ENCODE measurements at regions of chr9 and their contacts with region 1.

Region 1: DNA sequence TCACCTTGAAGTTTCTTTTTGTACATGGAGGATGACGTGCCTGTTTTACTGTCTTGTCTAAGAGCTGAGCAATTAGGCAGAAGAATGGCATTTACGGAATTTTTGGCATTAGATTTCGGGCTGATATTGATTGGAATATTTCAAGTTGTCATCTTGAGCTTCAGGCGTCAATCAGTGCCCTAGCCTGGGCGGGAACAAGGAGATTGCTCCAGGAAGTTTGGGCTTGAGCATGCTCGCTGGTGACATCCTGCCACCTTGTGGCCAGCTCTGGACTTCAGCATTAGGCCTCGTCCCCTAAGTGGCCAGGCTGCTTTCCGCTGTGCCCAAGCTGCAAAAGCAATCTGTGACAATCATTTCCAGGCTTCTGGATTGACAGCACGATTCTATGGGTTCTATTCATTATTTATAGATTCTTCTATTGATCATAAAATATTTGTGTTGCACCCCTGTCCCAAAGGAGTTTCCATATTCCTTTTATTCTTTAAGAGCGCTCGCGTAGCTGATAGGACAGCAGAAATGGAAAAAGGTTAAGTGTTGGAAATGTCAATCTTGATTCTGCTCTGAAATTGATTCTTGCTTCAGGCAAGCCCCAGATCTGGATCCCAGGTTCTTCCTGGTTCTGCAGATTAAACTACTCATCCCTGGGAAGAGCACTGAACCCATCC is 79.3 kb downstream of the SLC28A3 start:
- DNase-seq: peak; percentile 64
- CTCF ChIP-seq: peak; percentile 87

Region 2: DNA sequence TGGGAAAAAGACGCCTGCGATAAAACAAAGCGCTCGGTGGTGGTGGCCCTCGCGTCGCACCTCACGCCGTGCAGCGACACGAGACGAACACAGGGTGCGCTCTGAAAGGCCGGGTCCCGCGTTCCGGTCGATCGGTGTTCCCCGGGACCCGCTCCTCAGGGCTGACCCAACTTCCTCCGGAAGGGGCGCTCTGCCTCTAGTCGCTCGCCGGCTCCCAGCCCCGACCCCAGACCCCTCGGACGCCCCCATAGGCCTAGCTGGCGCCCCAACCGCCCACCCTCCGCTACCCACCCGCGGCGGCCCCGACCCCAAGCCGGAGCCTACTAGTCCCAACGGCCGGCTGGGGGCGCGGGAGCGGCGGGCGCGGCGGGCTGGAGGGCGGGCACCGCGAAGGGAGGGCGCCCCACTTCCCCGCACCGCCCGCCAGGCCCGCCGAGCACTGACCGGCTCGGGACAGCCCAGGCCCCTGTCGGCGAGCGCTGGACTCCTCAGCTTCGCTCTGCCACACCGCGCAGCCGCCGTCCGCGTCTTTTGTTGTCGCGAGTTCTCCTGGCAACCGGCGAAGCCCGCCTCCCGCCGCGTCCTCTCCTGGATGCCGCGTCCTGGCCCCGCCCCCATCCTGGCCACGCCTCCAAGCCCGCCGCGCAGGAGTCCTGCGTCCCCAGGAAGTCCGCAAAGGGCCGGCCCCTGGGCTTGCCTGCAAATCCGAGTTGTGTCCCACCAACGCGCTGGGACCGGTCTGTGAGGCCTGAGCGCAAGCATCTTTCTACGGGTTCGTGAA is 340.1 kb before region 1 on chr9 and contains the start of gene KIF27:
- CTCF ChIA-PET with region 1: interaction called, 14 read pairs
- POLR2A ChIA-PET with region 1: no interaction called
- DNase-seq: peak; percentile 97
- CTCF ChIP-seq: peak; percentile 15

Region 3: GRCh38 chr9:83937911-83938323 is 323.3 kb before region 1 on chr9:
- CTCF ChIA-PET with region 1: interaction called, 15 read pairs
- POLR2A ChIA-PET with region 1: no interaction called
- DNase-seq: peak; percentile 51
- CTCF ChIP-seq: peak; percentile 50

Region 4: DNA sequence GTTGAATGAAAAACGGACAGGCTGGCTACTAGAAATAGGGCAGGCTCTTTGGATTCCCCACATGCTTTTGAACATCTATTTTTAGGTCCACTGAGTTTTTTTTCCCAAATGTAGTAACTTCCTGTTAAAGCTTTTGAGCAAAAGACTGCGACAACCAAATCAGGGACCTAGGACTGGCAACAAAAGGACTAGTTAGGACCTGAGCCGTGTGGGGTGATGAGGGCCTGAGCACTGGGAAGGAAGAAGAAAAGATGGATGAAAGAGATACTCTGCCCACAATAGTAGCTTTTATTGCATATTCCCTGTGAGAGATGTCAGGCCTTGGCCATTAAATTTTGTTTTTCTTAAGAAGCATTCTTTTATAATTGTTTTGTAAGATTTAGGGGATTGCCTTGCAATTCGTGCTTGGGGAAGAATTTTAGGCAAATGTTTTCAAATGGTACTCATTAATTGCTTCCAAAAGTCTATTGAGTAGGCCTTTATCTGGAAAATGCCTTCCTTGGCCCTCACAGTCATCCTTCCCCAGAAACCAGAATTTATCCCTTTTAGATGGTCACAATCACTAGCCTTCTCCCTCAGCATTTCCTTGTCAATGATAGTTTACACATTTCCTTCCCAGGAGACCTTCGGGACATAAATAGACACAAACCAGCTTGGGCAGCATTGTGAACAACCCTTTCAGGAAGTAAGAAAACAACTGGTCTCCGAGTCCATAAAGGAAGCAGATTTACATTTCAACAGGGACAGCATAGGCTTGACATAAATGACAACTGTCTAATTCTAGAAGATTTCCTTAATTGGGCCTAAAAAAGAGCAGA is 114.1 kb before region 1 on chr9:
- CTCF ChIA-PET with region 1: no interaction called
- POLR2A ChIA-PET with region 1: no interaction called
- DNase-seq: no peak
- CTCF ChIP-seq: no peak

Region 5: DNA sequence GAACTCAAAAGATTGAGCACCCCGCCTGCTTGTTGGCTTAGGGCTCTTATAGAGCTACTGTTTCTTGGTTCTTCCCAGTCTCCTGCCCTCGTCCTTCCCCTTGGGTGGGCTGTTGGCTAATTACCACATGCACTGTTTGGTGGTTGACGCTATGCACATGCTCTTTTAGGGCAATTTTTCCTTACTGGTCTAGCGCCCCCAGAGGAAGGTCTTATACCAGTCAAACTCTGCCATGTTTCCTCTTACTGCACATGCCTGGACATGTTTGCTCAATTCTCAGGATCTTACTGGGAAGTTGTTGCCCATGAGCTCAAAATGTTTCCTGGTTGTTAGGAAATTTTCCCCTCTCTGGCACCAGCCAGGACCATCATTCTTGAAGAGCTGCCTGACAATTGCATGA is 22.6 kb before region 1 on chr9:
- CTCF ChIA-PET with region 1: interaction called, 10 read pairs
- POLR2A ChIA-PET with region 1: no interaction called
- DNase-seq: no peak
- CTCF ChIP-seq: no peak

Region 6: GRCh38 chr9:84271531-84271900 is 10.3 kb after region 1 on chr9:
- CTCF ChIA-PET with region 1: interaction called, 15 read pairs
- POLR2A ChIA-PET with region 1: no interaction called
- DNase-seq: peak; percentile 72
- CTCF ChIP-seq: no peak

Region 7: DNA sequence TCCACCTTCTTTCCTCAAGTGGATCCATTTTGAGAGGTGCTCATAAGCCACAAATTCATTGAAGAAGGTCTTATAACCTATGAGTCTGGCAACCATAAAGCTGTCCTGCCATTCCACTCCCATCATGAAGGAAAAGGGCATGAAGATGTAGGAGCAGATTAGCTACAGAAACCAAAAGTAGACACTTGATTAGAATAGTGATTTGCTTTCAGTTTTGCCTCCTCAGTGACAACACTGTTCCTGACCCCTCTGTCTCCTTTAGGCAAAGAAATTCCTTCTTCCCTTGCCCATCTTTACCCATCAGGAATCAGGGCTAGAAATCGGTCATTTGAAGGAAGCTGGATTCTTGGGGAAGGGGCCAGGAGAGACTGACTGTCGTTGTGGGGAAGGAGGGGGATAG is 24.2 kb after region 1 on chr9:
- CTCF ChIA-PET with region 1: interaction called, 15 read pairs
- POLR2A ChIA-PET with region 1: no interaction called
- DNase-seq: peak; percentile 37
- CTCF ChIP-seq: no peak

Region 8: DNA sequence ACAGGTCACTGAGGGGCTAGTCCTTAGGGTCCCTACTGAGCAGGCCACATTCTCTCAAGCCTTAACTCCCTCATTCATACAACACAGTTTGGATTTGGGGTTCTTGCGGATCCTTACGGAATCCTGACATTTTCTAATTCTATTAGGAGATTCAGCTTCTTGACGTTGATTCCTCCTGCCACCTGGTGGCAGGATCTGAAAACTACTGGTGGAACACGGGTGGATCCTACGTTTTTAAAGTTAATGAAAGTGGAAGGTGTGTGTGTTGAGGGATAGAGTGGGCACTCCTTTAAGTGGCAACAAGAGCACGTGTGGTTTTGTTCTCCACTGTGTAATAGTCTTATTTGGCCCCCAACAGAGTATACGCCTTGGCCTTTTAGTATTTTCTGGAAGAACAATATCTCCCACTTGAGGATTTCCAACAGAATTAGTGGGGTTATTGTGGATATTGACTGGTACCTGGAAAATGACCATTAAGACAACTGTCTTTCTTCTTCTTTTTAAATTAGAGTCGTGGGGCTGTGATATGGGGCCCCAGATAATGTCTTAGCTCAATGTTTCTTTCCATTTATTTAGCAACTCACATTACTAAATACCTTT is 54.2 kb after region 1 on chr9:
- CTCF ChIA-PET with region 1: interaction called, 13 read pairs
- POLR2A ChIA-PET with region 1: no interaction called
- DNase-seq: peak; percentile 59
- CTCF ChIP-seq: peak; percentile 84

Region 9: GRCh38 chr9:84592918-84593317 is 331.7 kb after region 1 on chr9:
- CTCF ChIA-PET with region 1: no interaction called
- POLR2A ChIA-PET with region 1: no interaction called
- DNase-seq: no peak
- CTCF ChIP-seq: no peak